Left cardiac atrium (tissue), 4 donors: ENCODE measurements at regions of chr3 and their contacts with region 1.

Region 1: DNA sequence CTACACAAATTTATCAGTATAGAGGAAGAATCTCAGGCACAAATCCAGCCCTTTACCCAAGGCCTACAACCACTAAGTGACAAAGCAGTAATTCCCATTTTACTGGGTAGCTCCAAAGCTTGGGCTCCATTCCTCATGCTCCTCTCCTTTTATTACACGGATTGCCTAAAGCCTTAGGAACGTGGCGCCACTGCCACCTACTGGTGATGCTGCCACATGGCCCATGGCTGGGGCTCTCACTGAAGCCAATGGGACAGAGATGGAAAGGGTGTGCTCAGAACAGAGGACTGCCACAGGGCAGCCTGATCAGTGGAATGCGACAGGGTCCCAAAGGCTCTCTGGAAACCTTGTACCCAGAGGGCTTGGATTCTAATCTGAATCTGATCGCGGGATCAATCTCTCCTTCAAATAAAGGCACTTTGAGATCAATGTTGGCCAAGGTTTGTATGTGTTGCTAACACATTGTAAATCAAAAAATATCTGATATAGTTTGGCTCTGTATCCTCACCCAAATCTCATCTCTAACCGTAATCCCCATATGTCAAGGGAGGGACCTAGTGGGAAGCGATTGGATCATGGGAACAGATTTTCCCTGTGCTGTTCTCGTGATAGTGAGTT is 33.5 kb upstream of the LYZL4 start:
- DNase-seq: peak; percentile 83
- ATAC-seq: peak; percentile 96 to 97

Region 2: GRCh38 chr3:41900265-41900664 is 543.7 kb before region 1 on chr3:
- intact Hi-C with region 1: loop called in 1 of 2 experiments (anchors 10 kb)
- DNase-seq: no peak
- ATAC-seq: no peak

Region 3: DNA sequence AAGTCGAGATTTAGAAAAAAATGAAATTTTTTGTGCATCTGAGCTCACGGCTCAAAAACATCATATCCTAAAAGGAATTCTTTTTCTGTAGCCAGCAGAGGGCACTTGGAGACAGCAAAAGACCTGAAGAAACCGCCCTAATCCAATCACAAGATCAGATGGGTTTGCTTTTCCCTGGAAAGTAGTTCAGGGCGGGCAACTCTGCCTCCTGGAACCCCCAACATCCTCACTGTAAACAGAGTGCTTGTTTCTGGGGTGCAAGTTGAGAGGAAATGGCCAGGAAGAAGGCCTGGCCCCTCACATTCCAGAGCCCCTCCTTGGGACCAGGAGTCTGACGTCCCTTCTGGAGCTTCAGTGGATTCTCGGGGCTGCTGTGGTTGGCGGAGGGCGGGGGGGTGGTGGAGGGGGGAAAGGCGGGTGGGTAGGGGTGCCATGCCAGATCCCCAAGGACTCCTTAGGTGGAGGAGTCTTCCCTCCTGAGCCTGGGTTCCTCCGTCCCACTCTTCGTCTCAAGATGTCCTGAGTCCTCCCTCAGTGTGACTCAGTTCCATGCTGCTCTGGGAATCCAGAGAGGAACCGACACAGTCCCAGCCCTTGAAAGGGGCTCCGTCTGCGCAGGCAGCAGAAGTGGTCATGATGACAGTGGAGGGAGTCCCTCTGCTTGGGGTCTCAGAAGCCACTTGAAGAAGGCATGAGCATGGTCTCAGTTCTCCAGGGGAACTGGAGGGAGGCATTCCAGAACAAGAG is 213.8 kb before region 1 on chr3:
- intact Hi-C with region 1: loop called in 1 of 2 experiments (anchors 5 kb)
- DNase-seq: no peak
- ATAC-seq: peak in 1 of 2 donors; percentile 43

Region 4: DNA sequence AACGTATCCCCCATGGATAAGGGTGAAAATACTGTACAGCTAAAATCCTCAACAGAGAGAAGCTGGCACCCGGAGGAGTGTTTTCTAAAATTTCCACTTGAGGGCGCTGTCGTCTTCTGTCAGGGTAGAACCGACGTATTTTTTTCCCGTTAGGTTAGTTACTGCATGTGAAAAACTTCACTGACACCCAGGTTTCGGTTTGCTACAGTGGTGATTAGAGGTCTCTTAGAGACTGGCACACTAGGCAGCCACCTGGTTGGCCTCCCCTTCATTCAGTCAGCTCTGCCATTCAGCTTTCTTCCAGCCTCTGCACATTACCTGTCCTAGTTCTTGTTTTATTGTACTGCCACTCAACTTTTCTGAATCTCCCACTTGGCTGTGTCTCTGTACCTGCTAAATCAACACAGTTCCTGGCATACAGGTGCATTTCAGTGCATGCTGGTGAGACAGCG is 196.3 kb before region 1 on chr3:
- intact Hi-C with region 1: loop called (anchors 1 to 5 kb)
- DNase-seq: no peak
- ATAC-seq: peak; percentile 41 to 53